IMR-90 (cell line): ENCODE measurements at regions of chr3 and their contacts with region 1.

Region 1: DNA sequence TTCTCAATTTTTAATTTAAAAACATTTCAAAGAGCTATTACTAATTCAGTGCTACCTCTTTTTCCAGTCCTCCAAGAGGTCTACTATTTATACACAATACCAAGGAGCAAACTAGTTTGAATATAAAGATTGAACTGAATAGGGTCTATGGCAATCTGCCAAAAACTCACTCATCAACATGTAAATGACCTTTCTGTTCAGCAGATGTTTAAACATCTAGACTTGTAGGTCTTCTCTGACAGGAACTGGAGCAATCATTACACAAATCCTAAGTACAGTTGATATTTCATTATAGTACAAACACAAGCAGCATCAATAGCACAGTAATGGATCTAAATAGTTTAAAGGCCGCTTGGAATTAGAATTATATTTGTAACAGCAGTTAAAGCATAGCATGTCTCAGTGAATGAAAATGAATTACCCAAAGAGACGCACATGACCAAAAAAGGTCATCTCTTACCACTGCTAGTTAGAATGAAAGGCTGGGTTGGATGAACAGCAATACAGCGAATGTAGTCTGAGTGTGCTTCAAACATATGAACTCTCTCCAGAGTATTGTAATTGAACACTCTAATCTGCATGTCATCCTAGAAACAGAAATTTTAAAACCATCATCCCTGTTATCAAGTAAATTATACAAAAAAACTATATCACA is 10.7 kb downstream of the COPB2 start:
- DNase-seq: peak; percentile 52
- ATAC-seq: no peak
- H3K4me3 ChIP-seq: no peak overlapping the region
- H3K27ac ChIP-seq: no peak overlapping the region
- H3K4me1 ChIP-seq: no peaks in the 10 kb centered on the region
- H3K27me3 ChIP-seq: no peaks in the 10 kb centered on the region
- CTCF ChIP-seq: no peak
- POLR2A ChIP-seq: no peak
- RAD21 ChIP-seq: no peak

Region 2: GRCh38 chr3:139364549-139364948 is 14.2 kb before region 1 on chr3:
- CTCF ChIA-PET with region 1: interaction called, 3 read pairs
- POLR2A ChIA-PET with region 1: interaction called, 3 read pairs
- dilution Hi-C with region 1: no loop called
- in situ Hi-C with region 1: no loop called
- intact Hi-C with region 1: loop called (anchors 2 kb)
- DNase-seq: no peak
- ATAC-seq: no peak
- H3K4me3 ChIP-seq: no peak overlapping the region
- H3K27ac ChIP-seq: no peak overlapping the region
- H3K4me1 ChIP-seq: peaks cover 2% of the 10 kb centered on the region; the same call in 1 of the 2 replicates
- H3K27me3 ChIP-seq: no peaks in the 10 kb centered on the region
- CTCF ChIP-seq: no peak
- POLR2A ChIP-seq: no peak
- RAD21 ChIP-seq: no peak